ENCODE measurements at regions of chr9 and their contacts with region 1.

Region 1: DNA sequence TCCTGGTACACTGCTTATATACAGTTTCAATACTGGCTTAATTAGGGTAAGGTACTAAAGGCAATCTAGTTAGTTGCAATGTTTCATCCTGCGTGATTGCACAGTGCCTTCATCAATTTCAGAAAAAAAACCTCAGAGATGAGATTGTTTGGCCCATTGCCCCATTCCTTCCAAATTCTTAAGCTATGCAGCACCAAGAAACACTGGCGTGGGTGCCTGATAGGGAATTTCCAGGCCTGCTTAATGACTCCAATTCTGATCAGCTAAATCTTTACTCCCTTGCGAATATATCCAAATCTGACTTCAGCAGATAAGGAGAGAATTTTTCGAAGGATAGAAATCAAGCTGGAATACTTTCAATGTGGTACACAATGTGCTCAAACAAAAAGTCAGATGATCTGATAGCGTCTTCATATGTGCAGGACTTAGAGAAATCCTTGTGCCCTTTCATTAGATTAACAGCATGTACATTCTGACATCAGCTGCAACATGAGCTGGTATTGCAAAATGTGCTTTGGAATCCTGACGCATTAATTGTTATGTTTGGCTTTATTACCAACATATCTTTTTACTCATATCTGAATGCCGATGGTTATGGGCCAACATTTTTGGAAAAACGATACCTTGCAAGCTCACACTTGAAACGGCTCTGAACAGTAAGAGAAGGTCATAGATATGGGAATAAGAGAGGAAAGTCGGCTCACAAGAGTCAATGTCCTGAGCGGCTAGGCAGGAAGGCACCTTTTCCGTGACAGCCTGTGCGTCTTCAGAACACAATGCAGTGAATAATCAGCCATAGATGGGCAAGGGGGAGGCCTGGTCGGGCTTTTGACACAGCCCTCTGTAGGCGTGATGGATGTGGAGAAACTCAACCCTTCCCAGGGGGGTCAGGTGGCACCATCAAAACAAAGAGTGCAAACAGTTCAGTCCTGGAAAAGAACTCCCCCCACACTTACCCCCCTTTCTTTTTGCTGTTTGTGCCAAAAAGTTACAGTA is 36.3 kb upstream of the GAS1 start:
- DNase-seq: peak; percentile 13 to 32
- ATAC-seq: peak; percentile 72 to 80
- H3K4me3 ChIP-seq: no peak overlapping the region
- H3K27ac ChIP-seq: peak overlapping the region in 3 of 4 donors; percentile 43 to 77 (median 47)
- H3K4me1 ChIP-seq: peaks cover 12 to 15% of the 10 kb centered on the region in 2 donors
- H3K27me3 ChIP-seq: no peaks in the 10 kb centered on the region
- CTCF ChIP-seq: no peak
- POLR2A ChIP-seq: no peak

Region 2: GRCh38 chr9:87107072-87107471 is 123.5 kb after region 1 on chr9:
- in situ Hi-C with region 1: loop called in 1 of 4 experiments (anchors 10 kb)
- intact Hi-C with region 1: no loop called
- DNase-seq: no peak
- ATAC-seq: peak; percentile 60 to 62
- H3K4me3 ChIP-seq: no peak overlapping the region
- H3K27ac ChIP-seq: no peak overlapping the region
- H3K4me1 ChIP-seq: peaks cover 3 to 26% of the 10 kb centered on the region in 2 donors
- H3K27me3 ChIP-seq: no peaks in the 10 kb centered on the region
- CTCF ChIP-seq: peak in 1 of 5 experiments; percentile 27
- POLR2A ChIP-seq: no peak

Region 3: GRCh38 chr9:87148331-87149104 is 165.0 kb after region 1 on chr9:
- in situ Hi-C with region 1: no loop called
- intact Hi-C with region 1: loop called (anchors 5 kb)
- DNase-seq: peak; percentile 60 to 76
- ATAC-seq: peak; percentile 80 to 88
- H3K4me3 ChIP-seq: peak overlapping the region; percentile 44 to 60 (median 54)
- H3K27ac ChIP-seq: peak overlapping the region; percentile 84 to 90 (median 86)
- H3K4me1 ChIP-seq: peaks cover 11 to 15% of the 10 kb centered on the region in 2 donors
- H3K27me3 ChIP-seq: no peaks in the 10 kb centered on the region
- CTCF ChIP-seq: peak in 1 of 5 experiments; percentile 32
- POLR2A ChIP-seq: peak in 1 of 2 donors; percentile 10